Heart right ventricle (tissue), 16 donors: ENCODE measurements at regions of chr7 and their contacts with region 1.

Region 1: DNA sequence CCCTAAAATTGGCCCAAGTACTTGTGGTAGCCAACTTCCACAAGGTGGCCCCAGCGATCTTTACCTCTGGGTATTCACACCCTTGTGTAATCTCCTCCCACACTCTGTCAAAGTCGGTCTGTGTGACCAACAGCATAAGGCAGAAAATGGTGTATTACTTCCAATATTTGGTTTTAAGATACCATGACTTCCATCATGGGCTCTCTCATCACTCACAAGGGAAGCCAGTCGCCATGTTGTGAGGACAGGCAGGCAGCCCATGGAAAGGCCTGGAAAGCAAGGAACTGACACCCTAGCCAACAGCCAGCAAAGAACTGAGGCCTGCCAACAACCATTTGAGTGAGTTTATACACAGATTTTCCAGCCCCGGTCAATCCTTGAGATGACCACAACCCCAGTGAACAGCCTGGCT is 91.0 kb upstream of the KMT2E start:
- DNase-seq: peak; percentile 51 to 82
- ATAC-seq: peak; percentile 85 to 94 (median 92)
- H3K4me3 ChIP-seq: no peak overlapping the region
- H3K27ac ChIP-seq: peak overlapping the region in 8 of 10 donors; percentile 3 to 71 (median 56)
- H3K4me1 ChIP-seq: peaks cover 0 to 18% (median 13%) of the 10 kb centered on the region in 9 donors
- H3K27me3 ChIP-seq: no peaks in the 10 kb centered on the region
- CTCF ChIP-seq: peak; percentile 51 to 84 (median 70)

Region 2: DNA sequence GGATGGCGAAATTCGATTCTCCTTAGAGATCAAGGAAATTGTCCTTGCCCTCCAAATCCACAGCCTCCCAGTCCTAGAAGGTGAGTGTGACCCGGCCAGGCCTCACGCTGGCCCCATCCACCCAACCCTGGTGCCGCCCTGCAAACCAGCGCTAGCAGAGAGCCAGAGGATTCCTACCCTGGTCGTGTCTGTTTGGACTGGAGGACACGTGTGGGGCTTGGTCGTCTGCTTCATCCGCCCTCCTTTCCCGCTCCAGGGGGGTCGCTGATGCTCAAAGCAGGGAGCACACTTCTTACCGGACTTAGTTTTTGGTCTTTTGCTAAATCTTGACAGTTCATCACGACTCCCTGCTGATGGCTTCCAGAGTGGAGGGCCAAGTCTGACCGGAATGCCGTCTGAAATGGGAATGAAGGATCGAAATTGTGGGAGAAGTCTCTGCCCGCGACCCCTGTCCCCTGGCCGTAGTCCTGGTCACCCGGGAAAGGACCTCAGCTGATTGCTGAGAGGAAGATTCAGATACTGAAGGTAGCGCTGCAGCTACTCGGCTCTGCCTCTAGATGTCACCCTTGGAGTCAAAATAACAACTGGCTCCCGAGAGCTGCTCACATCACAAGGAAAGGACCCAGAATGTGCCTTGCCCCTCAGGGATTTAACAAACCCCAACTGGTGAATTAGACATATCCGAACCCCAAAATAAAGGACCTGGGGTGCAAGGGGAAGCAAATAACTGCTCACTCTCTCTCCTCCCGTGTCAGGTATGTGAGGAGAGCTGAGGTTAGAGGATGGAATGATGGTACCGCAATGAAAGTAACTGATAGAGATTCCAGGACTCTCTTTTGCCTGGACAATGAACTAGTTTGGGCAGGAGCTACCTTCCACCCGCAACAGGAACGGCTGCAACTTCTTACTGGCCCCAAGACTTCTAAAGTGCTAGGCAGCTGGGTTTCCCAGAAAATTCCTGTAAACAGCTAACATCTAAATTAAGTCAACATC is 691.7 kb before region 1 on chr7:
- intact Hi-C with region 1: loop called in 7 of 10 experiments (anchors 2 to 10 kb)
- DNase-seq: peak in 1 of 2 donors; percentile 22
- ATAC-seq: peak in 6 of 8 donors; percentile 49 to 78 (median 58)
- H3K4me3 ChIP-seq: no peak overlapping the region
- H3K27ac ChIP-seq: no peak overlapping the region
- H3K4me1 ChIP-seq: peaks cover 0 to 6% (median 0%) of the 10 kb centered on the region in 9 donors
- H3K27me3 ChIP-seq: peaks cover 0 to 35% (median 17%) of the 10 kb centered on the region in 7 donors
- CTCF ChIP-seq: peak; percentile 56 to 84 (median 77)

Region 3: GRCh38 chr7:104883718-104884452 is 39.1 kb before region 1 on chr7:
- intact Hi-C with region 1: loop called in 7 of 10 experiments (anchors 1 to 5 kb)
- DNase-seq: peak; percentile 88 to 91
- ATAC-seq: peak; percentile 95 to 99 (median 98)
- H3K4me3 ChIP-seq: peak overlapping the region in 4 of 10 donors; percentile 4 to 27 (median 24)
- H3K27ac ChIP-seq: peak overlapping the region; percentile 26 to 90 (median 80)
- H3K4me1 ChIP-seq: peaks cover 3 to 20% (median 12%) of the 10 kb centered on the region in 9 donors
- H3K27me3 ChIP-seq: no peaks in the 10 kb centered on the region
- CTCF ChIP-seq: peak; percentile 87 to 97 (median 95)

Region 4: DNA sequence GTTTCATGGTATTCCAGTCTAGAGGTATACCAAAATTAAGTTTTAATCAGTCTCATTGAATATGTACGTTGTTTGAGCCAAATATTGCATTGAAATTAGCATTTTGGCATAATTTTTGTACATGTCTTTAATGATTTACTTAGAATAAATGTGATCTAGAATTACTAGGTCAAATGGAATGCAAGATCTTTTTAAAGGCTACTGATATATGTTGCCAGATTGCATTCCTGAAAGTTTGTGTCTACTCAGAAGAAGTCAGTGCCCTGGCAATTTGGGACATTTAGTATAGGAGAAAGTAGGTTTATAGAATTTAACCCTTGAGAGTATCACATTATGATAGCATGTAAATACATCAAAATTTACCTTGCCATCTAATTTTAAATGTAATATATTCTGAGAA is 123.4 kb after region 1 on chr7:
- intact Hi-C with region 1: loop called in 1 of 10 experiments (anchors 10 kb)
- DNase-seq: no peak
- ATAC-seq: no peak
- H3K4me3 ChIP-seq: no peak overlapping the region
- H3K27ac ChIP-seq: no peak overlapping the region
- H3K4me1 ChIP-seq: peaks cover 0 to 60% (median 48%) of the 10 kb centered on the region in 9 donors
- H3K27me3 ChIP-seq: no peaks in the 10 kb centered on the region
- CTCF ChIP-seq: no peak

Region 5: DNA sequence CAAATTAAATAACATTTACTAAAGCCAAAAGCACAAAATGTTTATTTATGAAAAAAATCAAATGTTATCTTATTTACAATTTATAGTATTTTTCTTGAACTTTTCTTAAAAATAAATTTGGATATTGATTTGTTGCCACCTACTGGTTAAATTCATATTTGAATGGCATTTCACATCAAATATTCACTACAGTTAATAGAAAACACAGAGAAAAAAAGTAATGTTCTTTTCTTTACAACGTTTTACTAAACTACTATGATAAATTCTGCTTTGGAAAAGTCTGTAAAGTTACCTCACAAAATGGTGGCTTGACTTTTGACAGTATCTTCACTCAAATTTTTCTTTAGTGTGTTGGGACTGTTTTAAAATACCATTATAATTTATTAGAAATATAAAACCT is 413.0 kb after region 1 on chr7:
- intact Hi-C with region 1: loop called in 2 of 10 experiments (anchors 10 kb)
- DNase-seq: no peak
- ATAC-seq: no peak
- H3K4me3 ChIP-seq: no peak overlapping the region
- H3K27ac ChIP-seq: no peak overlapping the region
- H3K4me1 ChIP-seq: peaks cover 0 to 18% (median 6%) of the 10 kb centered on the region in 9 donors
- H3K27me3 ChIP-seq: no peaks in the 10 kb centered on the region
- CTCF ChIP-seq: peak; percentile 22 to 66 (median 50)

Region 6: GRCh38 chr7:105487579-105488571 is 564.9 kb after region 1 on chr7:
- intact Hi-C with region 1: loop called in 2 of 10 experiments (anchors 10 kb)
- DNase-seq: peak in 1 of 2 donors; percentile 17
- ATAC-seq: peak; percentile 73 to 92 (median 82)
- H3K4me3 ChIP-seq: no peak overlapping the region
- H3K27ac ChIP-seq: peak overlapping the region in 6 of 10 donors; percentile 11 to 60 (median 46)
- H3K4me1 ChIP-seq: peaks cover 0 to 16% (median 9%) of the 10 kb centered on the region in 9 donors
- H3K27me3 ChIP-seq: no peaks in the 10 kb centered on the region
- CTCF ChIP-seq: peak in 8 of 9 donors; percentile 16 to 64 (median 49)